HEK293T (cell line): ENCODE measurements at regions of chr1 and their contacts with region 1.

Region 1: DNA sequence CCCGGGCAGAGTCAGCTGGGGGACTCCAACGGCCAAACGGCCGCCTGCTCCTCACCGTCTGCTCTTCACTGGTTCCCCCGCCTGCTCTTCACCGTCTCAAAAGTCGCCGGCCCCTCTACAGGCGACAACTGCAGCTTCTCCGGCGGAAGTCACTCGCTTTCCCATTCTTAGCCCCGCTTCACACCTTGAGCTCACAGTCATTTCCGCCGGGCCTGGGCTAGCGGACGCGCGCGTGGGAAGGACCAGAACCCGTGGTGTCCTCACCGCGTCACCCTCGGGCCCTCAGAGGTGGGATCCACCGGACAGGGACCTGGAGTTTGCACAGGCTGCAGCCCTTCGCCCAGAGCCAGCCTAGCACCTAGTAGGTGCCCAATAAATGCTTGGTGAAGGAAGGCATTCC is 27.9 kb upstream of the HJV start:
- DNase-seq: no peak

Region 2: GRCh38 chr1:145957443-145958319 is 91.8 kb before region 1 on chr1 and contains the start of gene LIX1L:
- CTCF ChIA-PET with region 1: no interaction called
- POLR2A ChIA-PET with region 1: interaction called, 12 read pairs
- DNase-seq: peak; percentile 95

Region 3: GRCh38 chr1:146036965-146037646 is 12.3 kb before region 1 on chr1:
- CTCF ChIA-PET with region 1: interaction called, 5 read pairs
- POLR2A ChIA-PET with region 1: interaction called, 162 read pairs
- DNase-seq: peak; percentile 47